ENCODE measurements at regions of chr12 and their contacts with region 1.

Region 1: DNA sequence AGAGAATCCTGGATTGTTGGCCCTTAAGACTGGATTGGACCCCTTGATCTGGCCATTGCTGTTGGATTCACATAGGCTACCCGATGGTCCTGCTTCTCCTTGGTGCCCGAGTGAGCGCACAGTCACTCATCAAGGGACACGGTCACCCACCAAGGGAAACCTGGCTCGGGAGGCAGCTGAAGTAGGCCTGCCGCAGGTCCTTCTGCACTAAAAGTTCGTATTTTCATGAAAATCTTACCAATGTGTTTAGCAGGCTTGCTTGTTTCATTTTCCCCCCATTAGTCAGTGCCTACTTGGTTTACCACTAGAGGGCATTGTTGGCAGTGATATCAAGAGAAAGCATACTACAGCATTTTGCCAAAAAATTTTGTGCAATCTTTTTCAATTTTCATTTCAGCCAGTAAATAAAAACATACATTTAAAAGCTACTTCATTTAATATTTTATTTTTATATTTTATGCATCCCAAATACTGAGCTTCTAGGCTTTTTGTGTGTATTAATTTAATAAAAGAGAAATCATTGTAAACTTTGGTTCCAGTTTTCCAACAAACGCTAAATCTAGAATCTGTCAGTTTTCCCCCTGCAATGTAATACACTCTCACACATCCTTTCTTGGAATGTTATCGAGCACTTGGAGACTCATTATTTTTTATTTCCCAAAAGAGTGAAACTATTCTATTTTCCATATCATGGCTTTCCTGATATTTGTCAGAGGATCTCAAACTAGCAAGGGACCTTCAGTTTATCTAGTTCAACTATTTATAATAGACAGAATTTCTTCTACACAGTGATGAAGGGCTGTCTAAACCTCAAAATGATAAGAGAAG is 116.7 kb downstream of the LMNTD1 start:
- DNase-seq: peak in 1 of 2 experiments; percentile 75
- H3K4me3 ChIP-seq: no peak overlapping the region
- H3K4me3 Mint-ChIP-seq: peak overlapping the region; percentile 32
- H3K27ac Mint-ChIP-seq: peak overlapping the region; percentile 67
- H3K4me1 ChIP-seq: peaks cover 25% of the 10 kb centered on the region
- H3K4me1 Mint-ChIP-seq: peaks cover 20% of the 10 kb centered on the region
- H3K27me3 ChIP-seq: no peaks in the 10 kb centered on the region
- H3K27me3 Mint-ChIP-seq: no peaks in the 10 kb centered on the region
- CTCF ChIP-seq: peak; percentile 87 to 90

Region 2: DNA sequence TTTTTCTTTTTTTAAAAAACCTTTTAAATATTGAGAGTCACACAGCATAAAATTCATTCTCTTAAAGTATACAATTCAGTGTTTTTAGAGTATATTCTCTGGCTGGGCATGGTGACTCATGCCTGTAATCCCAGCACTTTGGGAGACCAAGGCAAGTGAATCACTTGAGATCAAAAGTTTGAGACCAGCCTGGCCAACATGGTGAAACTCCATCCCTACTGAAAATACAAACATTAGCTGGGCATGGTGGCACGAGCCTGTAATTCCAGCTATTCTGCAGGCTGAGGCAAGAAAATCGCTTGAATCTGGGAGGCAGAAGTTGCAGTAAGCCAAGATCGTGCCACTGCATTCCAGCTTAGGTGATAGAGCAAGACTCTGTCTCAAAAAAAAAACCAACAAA is 419.1 kb before region 1 on chr12:
- CTCF ChIA-PET with region 1: no interaction called
- POLR2A ChIA-PET with region 1: no interaction called
- intact Hi-C with region 1: no loop called
- DNase-seq: no peak
- H3K4me3 ChIP-seq: no peak overlapping the region
- H3K4me3 Mint-ChIP-seq: no peak overlapping the region
- H3K27ac Mint-ChIP-seq: no peak overlapping the region
- H3K4me1 ChIP-seq: no peaks in the 10 kb centered on the region
- H3K4me1 Mint-ChIP-seq: no peaks in the 10 kb centered on the region
- H3K27me3 ChIP-seq: no peaks in the 10 kb centered on the region; the same call in 1 of the 2 replicates
- H3K27me3 Mint-ChIP-seq: no peaks in the 10 kb centered on the region
- CTCF ChIP-seq: no peak

Region 3: DNA sequence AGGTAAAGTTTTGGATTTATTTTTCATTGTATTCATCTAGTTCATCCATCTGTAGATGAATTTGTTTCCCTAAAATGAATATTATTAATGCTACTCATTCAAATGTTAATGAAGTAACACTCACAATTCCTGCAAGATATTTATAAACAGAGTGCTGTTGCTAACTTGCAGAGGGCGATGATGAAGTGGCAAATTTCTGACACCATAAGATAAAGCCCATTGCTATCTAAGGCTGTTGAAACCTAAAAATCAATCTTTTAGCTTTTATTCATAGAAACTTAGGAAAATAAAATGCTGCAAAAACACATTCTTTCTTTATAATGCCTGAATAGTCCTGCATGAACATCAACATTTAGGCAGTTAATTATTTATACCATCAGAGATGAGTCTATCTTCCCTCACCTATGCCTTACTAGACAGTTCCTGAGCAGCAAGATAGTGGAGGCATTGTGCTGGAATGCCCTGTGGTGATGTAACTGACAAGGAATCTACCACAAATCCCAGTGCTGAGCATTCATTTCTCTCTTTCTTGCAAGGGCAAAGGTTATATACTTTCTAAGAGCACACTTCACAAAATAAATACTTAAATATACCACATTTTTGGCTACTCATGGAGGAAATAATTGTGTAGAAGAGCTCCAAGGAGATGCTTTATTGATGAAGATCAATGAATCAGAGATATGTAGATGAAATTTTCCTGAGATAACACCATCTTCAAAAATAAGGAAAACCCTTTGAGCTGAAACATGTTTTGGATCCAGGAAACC is 59.1 kb after region 1 on chr12:
- CTCF ChIA-PET with region 1: no interaction called
- POLR2A ChIA-PET with region 1: no interaction called
- intact Hi-C with region 1: no loop called
- DNase-seq: peak; percentile 63 to 67
- H3K4me3 ChIP-seq: no peak overlapping the region
- H3K4me3 Mint-ChIP-seq: peak overlapping the region; percentile 16
- H3K27ac Mint-ChIP-seq: peak overlapping the region; percentile 85
- H3K4me1 ChIP-seq: peaks cover 45% of the 10 kb centered on the region
- H3K4me1 Mint-ChIP-seq: peaks cover 46% of the 10 kb centered on the region
- H3K27me3 ChIP-seq: no peaks in the 10 kb centered on the region
- H3K27me3 Mint-ChIP-seq: no peaks in the 10 kb centered on the region
- CTCF ChIP-seq: no peak

Region 4: GRCh38 chr12:25557830-25558436 is 121.5 kb after region 1 on chr12:
- CTCF ChIA-PET with region 1: interaction called, 4 read pairs
- POLR2A ChIA-PET with region 1: no interaction called
- intact Hi-C with region 1: loop called (anchors 1 kb)
- DNase-seq: peak in 1 of 2 experiments; percentile 72
- H3K4me3 ChIP-seq: no peak overlapping the region
- H3K4me3 Mint-ChIP-seq: no peak overlapping the region
- H3K27ac Mint-ChIP-seq: no peak overlapping the region
- H3K4me1 ChIP-seq: no peaks in the 10 kb centered on the region
- H3K4me1 Mint-ChIP-seq: peaks cover 7% of the 10 kb centered on the region
- H3K27me3 ChIP-seq: no peaks in the 10 kb centered on the region
- H3K27me3 Mint-ChIP-seq: peaks cover 3% of the 10 kb centered on the region
- CTCF ChIP-seq: peak; percentile 52 to 72

Region 5: DNA sequence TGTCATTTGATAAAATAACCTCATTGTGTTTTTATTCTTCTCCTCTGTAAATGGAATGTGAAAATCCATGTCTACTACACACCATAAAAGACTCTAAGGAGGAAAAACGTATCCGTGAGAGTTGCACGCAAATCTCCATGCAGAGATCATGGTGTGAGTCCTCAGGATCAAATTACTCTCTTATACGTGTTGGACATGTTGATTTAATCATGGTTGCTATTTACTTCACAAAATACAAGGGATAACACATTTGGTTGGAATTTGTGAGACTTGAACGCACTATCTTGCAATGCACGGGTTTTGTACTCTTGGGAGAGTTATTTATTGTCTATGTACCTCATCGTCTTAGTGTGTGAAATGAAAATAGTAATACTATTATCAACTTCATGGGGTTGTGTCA is 394.0 kb after region 1 on chr12:
- CTCF ChIA-PET with region 1: no interaction called
- POLR2A ChIA-PET with region 1: no interaction called
- intact Hi-C with region 1: loop called (anchors 5 kb)
- DNase-seq: no peak
- H3K4me3 ChIP-seq: no peak overlapping the region
- H3K4me3 Mint-ChIP-seq: no peak overlapping the region
- H3K27ac Mint-ChIP-seq: no peak overlapping the region
- H3K4me1 ChIP-seq: peaks cover 12% of the 10 kb centered on the region
- H3K4me1 Mint-ChIP-seq: peaks cover 16% of the 10 kb centered on the region
- H3K27me3 ChIP-seq: no peaks in the 10 kb centered on the region
- H3K27me3 Mint-ChIP-seq: no peaks in the 10 kb centered on the region
- CTCF ChIP-seq: no peak

Region 6: DNA sequence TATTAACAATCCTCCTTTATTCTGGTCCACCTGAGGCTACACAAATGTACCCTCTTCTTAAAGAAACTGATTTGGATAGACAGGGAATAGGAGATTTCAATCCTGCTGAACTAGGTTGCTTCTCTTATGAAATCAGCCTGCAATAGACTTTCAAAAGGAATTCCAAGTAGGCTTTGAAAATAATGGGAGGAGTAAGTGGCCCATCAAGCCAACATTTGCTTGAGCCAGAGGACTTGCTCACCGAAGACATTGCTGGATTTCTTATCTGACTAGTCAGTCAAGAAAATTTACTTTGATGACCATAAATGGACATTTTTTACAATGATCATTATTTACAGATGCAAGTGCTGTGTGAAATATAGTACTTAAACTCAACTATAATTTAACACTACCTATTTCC is 439.2 kb after region 1 on chr12:
- CTCF ChIA-PET with region 1: no interaction called
- POLR2A ChIA-PET with region 1: no interaction called
- intact Hi-C with region 1: loop called (anchors 5 kb)
- DNase-seq: peak; percentile 82 to 84
- H3K4me3 ChIP-seq: no peak overlapping the region
- H3K4me3 Mint-ChIP-seq: peak overlapping the region; percentile 49
- H3K27ac Mint-ChIP-seq: peak overlapping the region; percentile 96
- H3K4me1 ChIP-seq: peaks cover 57% of the 10 kb centered on the region
- H3K4me1 Mint-ChIP-seq: peaks cover 56% of the 10 kb centered on the region
- H3K27me3 ChIP-seq: no peaks in the 10 kb centered on the region
- H3K27me3 Mint-ChIP-seq: no peaks in the 10 kb centered on the region
- CTCF ChIP-seq: no peak

Measured in Caco-2 (cell line).